ENCODE measurements at regions of chr9 and their contacts with region 1.

Region 1: DNA sequence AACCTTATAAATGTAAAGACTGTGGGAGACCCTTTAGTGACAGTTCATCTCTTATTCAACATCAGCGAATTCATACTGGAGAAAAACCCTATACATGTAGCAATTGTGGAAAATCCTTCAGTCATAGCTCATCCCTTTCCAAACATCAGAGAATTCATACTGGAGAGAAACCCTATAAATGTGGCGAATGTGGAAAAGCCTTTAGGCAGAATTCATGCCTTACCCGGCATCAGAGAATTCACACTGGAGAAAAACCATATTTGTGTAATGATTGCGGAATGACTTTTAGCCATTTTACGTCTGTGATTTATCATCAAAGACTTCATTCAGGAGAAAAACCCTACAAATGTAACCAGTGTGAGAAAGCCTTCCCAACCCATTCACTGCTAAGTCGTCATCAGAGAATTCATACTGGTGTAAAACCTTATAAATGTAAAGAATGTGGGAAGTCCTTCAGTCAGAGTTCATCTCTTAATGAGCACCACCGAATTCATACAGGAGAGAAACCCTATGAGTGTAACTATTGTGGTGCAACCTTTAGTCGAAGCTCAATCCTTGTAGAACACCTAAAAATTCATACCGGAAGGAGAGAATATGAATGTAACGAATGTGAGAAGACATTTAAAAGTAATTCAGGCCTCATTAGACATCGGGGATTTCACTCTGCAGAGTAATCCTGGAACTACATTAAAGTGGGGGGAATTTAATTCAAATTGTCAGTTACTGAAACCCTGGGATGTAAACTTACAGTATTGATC is 17.7 kb downstream of the ZNF483 start:
- DNase-seq: no peak
- H3K4me3 ChIP-seq: no peak overlapping the region
- H3K27ac ChIP-seq: no peak overlapping the region
- H3K4me1 ChIP-seq: no peaks in the 10 kb centered on the region
- H3K27me3 ChIP-seq: no peaks in the 10 kb centered on the region
- CTCF ChIP-seq: no peak
- POLR2A ChIP-seq: no peak

Region 2: DNA sequence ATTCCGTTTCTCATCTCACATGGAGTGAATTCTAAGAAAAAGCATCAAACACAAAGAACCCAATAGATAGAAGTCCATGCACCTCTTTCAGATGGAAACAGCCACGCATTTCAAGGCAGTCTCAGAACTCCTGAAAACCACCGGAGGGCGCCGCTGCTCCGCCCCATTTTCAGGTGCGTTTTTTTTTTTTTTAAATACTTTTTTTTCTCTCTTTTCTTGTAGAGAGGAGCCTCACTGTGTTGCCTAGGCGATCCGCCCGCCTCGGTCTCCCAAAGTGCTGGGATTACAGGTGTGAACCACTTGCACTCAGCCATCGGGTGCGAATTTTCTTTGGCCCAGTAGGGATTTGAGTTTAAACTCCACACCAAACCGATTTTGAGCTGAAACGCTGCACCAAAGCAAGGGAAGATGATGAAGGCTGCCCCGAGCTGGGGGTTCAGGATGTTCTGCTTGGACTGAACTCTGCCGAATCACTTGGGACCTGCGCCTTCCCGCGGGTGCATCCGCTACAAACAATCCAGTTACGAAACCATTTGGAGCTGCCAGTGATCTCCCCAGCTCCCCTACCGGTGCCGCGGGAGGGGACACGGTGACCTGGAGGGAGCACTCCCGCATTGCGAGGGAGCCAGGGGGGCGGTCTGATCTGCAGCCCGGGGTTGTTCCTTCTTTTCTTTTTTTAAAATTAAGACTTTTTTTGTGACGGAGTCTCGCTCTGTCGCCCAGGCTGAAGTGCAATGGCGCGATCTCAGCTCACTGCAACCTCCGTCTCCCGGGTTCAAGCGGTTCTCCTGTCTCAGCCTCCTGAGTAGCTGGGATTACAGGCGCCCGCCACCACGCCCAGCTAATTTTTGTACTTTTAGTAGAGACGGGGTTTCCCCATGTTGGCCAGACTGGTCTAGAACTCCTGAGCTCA is 55.4 kb after region 1 on chr9:
- intact Hi-C with region 1: no loop called
- DNase-seq: peak; percentile 77 to 85
- H3K4me3 ChIP-seq: peak overlapping the region; percentile 16 to 68 (median 47)
- H3K27ac ChIP-seq: peak overlapping the region; percentile 59 to 89 (median 75)
- H3K4me1 ChIP-seq: peaks cover 0 to 8% of the 10 kb centered on the region in 2 donors
- H3K27me3 ChIP-seq: no peaks in the 10 kb centered on the region
- CTCF ChIP-seq: peak; percentile 36 to 94 (median 65)
- POLR2A ChIP-seq: no peak

Region 3: GRCh38 chr9:113042884-113043657 is 1500.4 kb after region 1 on chr9:
- intact Hi-C with region 1: loop called (anchors 10 kb)
- DNase-seq: no peak
- H3K4me3 ChIP-seq: no peak overlapping the region
- H3K27ac ChIP-seq: no peak overlapping the region
- H3K4me1 ChIP-seq: no peaks in the 10 kb centered on the region
- H3K27me3 ChIP-seq: no peaks in the 10 kb centered on the region
- CTCF ChIP-seq: no peak
- POLR2A ChIP-seq: no peak